CD8-positive, alpha-beta T cell (primary cell): ENCODE measurements at regions of chr16 and their contacts with region 1.

Region 1: GRCh38 chr16:68328151-68328859 is 17.5 kb downstream of the PRMT7 start:
- DNase-seq: peak; percentile 59 to 90 (median 77)
- ATAC-seq: peak; percentile 100
- H3K4me3 ChIP-seq: no peak overlapping the region
- H3K4me3 Mint-ChIP-seq: no peak overlapping the region
- H3K27ac ChIP-seq: no peak overlapping the region
- H3K27ac Mint-ChIP-seq: no peak overlapping the region
- H3K4me1 ChIP-seq: no peaks in the 10 kb centered on the region
- H3K4me1 Mint-ChIP-seq: peaks cover 7% of the 10 kb centered on the region
- H3K27me3 ChIP-seq: no peaks in the 10 kb centered on the region
- H3K27me3 Mint-ChIP-seq: no peaks in the 10 kb centered on the region
- CTCF ChIP-seq: peak; percentile 97

Region 2: DNA sequence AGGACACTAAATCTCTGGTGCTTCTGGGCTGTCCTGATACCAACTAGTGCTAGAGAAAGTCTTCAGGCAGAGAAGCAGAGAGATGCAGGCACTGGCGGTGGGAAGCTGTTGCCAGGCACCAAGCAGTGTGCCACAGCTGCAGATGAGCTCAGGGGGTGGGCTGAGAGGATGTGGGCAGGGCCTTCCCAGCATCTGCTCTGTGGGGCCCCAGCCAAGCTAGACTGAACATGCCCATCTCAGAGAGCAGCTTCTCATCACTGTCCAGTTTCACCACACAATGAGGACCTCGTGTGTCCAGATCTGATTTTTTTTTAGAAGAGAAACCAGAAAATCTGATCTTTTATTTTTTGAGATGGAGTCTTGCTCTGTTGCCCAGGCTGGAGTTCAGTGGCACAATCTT is 418.1 kb before region 1 on chr16:
- CTCF ChIA-PET with region 1: no interaction called
- POLR2A ChIA-PET with region 1: no interaction called
- intact Hi-C with region 1: no loop called
- DNase-seq: no peak
- ATAC-seq: peak; percentile 55
- H3K4me3 ChIP-seq: no peak overlapping the region
- H3K4me3 Mint-ChIP-seq: no peak overlapping the region
- H3K27ac ChIP-seq: no peak overlapping the region
- H3K27ac Mint-ChIP-seq: no peak overlapping the region
- H3K4me1 ChIP-seq: no peaks in the 10 kb centered on the region
- H3K4me1 Mint-ChIP-seq: peaks cover 16% of the 10 kb centered on the region
- H3K27me3 ChIP-seq: no peaks in the 10 kb centered on the region
- H3K27me3 Mint-ChIP-seq: no peaks in the 10 kb centered on the region
- CTCF ChIP-seq: no peak

Region 3: DNA sequence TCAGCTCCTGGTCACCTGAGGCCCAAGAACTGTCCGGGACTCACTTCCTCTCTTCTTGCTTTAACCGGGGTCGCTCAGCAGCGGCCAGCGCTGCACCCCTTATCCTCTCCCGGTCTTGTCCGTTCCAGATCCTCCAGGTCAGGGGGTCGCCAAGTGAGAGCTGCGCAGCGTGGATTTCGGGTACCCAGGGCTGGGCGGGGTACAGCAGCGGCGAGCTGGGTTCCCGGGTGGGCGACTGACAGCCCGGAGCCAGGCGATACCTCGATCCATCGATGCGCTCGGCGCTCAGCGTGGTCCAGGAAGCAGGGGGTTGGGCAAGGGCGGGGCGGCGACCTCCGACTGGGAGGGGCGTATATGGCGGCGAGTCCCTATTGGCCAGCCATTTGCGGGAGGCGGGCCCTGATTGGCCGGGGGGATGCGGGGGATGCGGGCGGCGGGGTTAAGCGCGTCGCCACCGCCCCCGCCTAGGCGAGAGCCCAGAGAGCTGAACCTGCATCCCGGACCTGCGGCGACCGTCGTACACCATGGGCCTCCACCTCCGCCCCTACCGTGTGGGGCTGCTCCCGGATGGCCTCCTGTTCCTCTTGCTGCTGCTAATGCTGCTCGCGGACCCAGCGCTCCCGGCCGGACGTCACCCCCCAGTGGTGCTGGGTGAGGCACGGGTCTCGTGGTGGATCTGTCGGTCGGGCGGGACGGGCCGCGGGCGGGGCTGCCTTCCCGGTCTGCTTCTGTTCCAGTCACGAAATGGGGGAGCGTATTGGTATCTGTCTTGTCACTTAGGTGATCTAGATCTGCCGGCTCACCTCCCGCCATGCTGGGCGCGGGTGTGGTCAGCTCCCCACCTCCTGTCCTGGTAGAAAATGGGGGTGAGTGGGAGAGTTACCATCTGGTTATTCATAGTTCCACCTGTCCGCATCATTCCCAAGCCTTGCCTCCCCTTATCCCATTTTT is 83.1 kb before region 1 on chr16 and contains the start of gene PLA2G15:
- CTCF ChIA-PET with region 1: interaction called, 55 read pairs
- POLR2A ChIA-PET with region 1: interaction called, 3 read pairs
- intact Hi-C with region 1: loop called in 1 of 2 experiments (anchors 1 kb)
- DNase-seq: peak; percentile 94 to 98 (median 96)
- ATAC-seq: peak; percentile 99
- H3K4me3 ChIP-seq: peak within 1 kb of the TSS; percentile 88 to 91
- H3K4me3 Mint-ChIP-seq: peak within 1 kb of the TSS; percentile 98
- H3K27ac ChIP-seq: peak within 1 kb of the TSS in 1 of 2 experiments; percentile 38
- H3K27ac Mint-ChIP-seq: peak within 1 kb of the TSS; percentile 79
- H3K4me1 ChIP-seq: peaks cover 21% of the 10 kb centered on the region
- H3K4me1 Mint-ChIP-seq: peaks cover 26% of the 10 kb centered on the region
- H3K27me3 ChIP-seq: no peaks in the 10 kb centered on the region
- H3K27me3 Mint-ChIP-seq: no peaks in the 10 kb centered on the region
- CTCF ChIP-seq: no peak
- total RNA-seq, gene PLA2G15: 5.1 to 6.0 TPM

Region 4: GRCh38 chr16:68289621-68290329 is 38.5 kb before region 1 on chr16:
- CTCF ChIA-PET with region 1: interaction called, 47 read pairs
- POLR2A ChIA-PET with region 1: no interaction called
- intact Hi-C with region 1: no loop called
- DNase-seq: peak in 7 of 9 experiments; percentile 32 to 64 (median 56)
- ATAC-seq: peak; percentile 44
- H3K4me3 ChIP-seq: no peak overlapping the region
- H3K4me3 Mint-ChIP-seq: peak overlapping the region; percentile 53
- H3K27ac ChIP-seq: peak overlapping the region; percentile 26 to 82
- H3K27ac Mint-ChIP-seq: peak overlapping the region; percentile 90
- H3K4me1 ChIP-seq: peaks cover 82% of the 10 kb centered on the region
- H3K4me1 Mint-ChIP-seq: peaks cover 84% of the 10 kb centered on the region
- H3K27me3 ChIP-seq: no peaks in the 10 kb centered on the region
- H3K27me3 Mint-ChIP-seq: no peaks in the 10 kb centered on the region
- CTCF ChIP-seq: no peak

Region 5: DNA sequence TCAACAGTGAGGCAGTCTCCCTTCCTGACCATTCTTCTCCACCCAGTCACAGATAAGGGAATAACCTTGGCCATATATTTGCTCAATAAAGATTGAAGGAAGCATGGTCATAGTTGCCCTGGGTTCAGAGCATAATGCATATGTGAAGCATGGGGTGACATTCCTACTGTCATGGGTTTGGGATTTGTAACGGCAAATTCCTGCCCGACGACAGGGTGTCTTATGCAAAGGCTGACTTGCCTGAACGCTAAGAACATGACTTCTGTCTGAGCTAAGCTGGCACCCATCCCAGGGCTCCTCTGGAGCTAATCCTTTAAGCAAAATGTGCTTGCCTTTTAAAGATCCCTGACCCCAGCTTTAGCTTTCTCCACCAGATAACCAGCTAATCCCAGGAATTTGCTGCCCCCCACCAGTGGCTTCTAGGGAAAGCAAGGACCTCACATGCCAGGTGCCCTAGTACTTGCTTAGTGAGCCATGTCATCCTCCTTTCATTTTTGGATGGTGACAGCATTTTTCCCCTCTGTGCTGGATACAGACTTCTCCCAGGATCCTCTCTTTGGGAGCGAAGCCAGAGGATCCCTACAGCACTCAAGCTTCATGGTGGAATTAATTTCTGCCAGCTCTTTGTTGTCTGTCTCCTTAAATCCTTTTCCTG is 29.3 kb before region 1 on chr16:
- CTCF ChIA-PET with region 1: interaction called, 13 read pairs
- POLR2A ChIA-PET with region 1: no interaction called
- intact Hi-C with region 1: no loop called
- DNase-seq: no peak
- ATAC-seq: no peak
- H3K4me3 ChIP-seq: no peak overlapping the region
- H3K4me3 Mint-ChIP-seq: no peak overlapping the region
- H3K27ac ChIP-seq: no peak overlapping the region
- H3K27ac Mint-ChIP-seq: peak overlapping the region; percentile 55
- H3K4me1 ChIP-seq: no peaks in the 10 kb centered on the region
- H3K4me1 Mint-ChIP-seq: peaks cover 29% of the 10 kb centered on the region
- H3K27me3 ChIP-seq: no peaks in the 10 kb centered on the region
- H3K27me3 Mint-ChIP-seq: no peaks in the 10 kb centered on the region
- CTCF ChIP-seq: no peak

Region 6: GRCh38 chr16:68342620-68343019 is 14.3 kb after region 1 on chr16:
- CTCF ChIA-PET with region 1: interaction called, 43 read pairs
- POLR2A ChIA-PET with region 1: no interaction called
- intact Hi-C with region 1: no loop called
- DNase-seq: no peak
- ATAC-seq: no peak
- H3K4me3 ChIP-seq: no peak overlapping the region
- H3K4me3 Mint-ChIP-seq: no peak overlapping the region
- H3K27ac ChIP-seq: no peak overlapping the region
- H3K27ac Mint-ChIP-seq: no peak overlapping the region
- H3K4me1 ChIP-seq: peaks cover 11% of the 10 kb centered on the region
- H3K4me1 Mint-ChIP-seq: peaks cover 12% of the 10 kb centered on the region
- H3K27me3 ChIP-seq: no peaks in the 10 kb centered on the region
- H3K27me3 Mint-ChIP-seq: no peaks in the 10 kb centered on the region
- CTCF ChIP-seq: no peak